PC-3 (cell line): ENCODE measurements at regions of chr11 and their contacts with region 1.

Region 1: DNA sequence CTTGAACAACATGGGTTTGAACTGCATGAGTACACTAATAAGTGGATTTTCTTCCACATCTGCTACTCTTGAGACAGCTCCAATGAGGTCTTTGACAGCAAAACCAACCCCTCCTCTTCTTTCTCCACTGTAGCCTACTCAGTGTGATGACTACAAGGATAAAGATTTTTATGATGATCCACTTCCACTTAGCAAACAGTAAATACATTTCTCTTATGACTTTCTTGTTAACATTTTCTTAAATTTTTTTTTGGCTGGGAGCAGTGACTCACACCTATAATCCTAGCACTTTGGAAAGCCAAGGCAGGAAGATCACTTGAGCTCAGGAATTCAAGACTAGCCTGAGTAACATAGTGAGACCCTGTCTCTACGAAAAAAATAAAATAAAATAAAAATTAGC is 9.9 kb upstream of the EIF4G2 start:
- DNase-seq: peak; percentile 94
- ATAC-seq: peak; percentile 98
- H3K4me3 ChIP-seq: no peak overlapping the region
- H3K27ac ChIP-seq: peak overlapping the region; percentile 63
- H3K4me1 ChIP-seq: peaks cover 31% of the 10 kb centered on the region
- H3K27me3 ChIP-seq: no peaks in the 10 kb centered on the region
- CTCF ChIP-seq: no peak

Region 2: GRCh38 chr11:10847960-10848870 is 29.6 kb after region 1 on chr11:
- CTCF ChIA-PET with region 1: no interaction called
- POLR2A ChIA-PET with region 1: interaction called, 4 read pairs
- intact Hi-C with region 1: loop called (anchors 2 kb)
- DNase-seq: no peak
- ATAC-seq: no peak
- H3K4me3 ChIP-seq: no peak overlapping the region
- H3K27ac ChIP-seq: no peak overlapping the region
- H3K4me1 ChIP-seq: peaks cover under 1% of the 10 kb centered on the region
- H3K27me3 ChIP-seq: no peaks in the 10 kb centered on the region
- CTCF ChIP-seq: no peak

Region 3: GRCh38 chr11:10857709-10858438 is 39.3 kb after region 1 on chr11 and contains the start of gene ZBED5:
- CTCF ChIA-PET with region 1: no interaction called
- POLR2A ChIA-PET with region 1: interaction called, 7 read pairs
- intact Hi-C with region 1: loop called (anchors 2 kb)
- DNase-seq: peak; percentile 97
- ATAC-seq: peak; percentile 93
- H3K4me3 ChIP-seq: peak within 1 kb of the TSS; percentile 76
- H3K27ac ChIP-seq: peak within 1 kb of the TSS; percentile 91
- H3K4me1 ChIP-seq: peaks cover 38% of the 10 kb centered on the region
- H3K27me3 ChIP-seq: no peaks in the 10 kb centered on the region
- CTCF ChIP-seq: no peak; the same call in 1 of the 2 replicates
- total RNA-seq, gene ZBED5: 19.5 and 21.0 TPM in 2 replicates